ENCODE measurements at regions of chr6 and their contacts with region 1.

Region 1: DNA sequence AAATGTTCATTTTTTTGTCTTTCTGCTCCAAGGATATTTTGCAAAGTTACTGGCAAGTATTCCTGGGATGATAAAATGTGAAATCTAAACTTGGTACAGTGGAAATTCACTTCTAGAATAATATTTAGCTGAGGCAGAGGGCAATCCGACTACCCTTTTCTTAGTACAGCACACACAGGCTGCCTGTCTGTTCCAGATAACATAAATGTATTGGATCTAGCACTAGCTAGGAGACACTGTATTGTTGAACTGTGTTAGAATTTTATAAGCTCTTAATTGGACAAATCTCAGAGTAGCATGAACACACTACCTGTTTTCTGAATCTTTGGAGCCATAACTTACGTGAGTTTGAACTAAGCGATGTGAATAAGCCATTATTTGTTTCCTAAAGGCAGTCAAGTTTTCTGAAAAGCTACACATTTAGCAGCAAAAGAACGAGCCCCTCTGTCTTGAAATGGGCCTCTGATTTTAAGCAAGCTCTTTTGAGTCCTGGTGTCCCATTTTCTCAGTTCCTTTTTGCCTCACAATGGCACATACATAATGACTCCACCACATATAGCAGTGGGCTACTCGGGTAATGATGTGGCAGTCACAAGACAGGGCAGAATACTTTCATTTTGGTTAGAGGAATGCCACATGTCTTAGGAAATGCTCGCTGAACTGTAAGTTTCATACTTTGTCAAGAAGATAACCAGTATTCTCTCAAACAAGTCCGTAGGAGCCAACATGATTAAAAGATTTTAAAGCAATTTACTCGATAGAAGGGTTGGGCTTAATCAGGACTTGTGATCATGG is 116.5 kb upstream of the ESR1 start:
- DNase-seq: no peak
- H3K4me3 Mint-ChIP-seq: no peak overlapping the region
- H3K27ac Mint-ChIP-seq: no peak overlapping the region
- H3K4me1 Mint-ChIP-seq: no peaks in the 10 kb centered on the region
- H3K27me3 Mint-ChIP-seq: no peaks in the 10 kb centered on the region
- CTCF ChIP-seq: no peak

Region 2: DNA sequence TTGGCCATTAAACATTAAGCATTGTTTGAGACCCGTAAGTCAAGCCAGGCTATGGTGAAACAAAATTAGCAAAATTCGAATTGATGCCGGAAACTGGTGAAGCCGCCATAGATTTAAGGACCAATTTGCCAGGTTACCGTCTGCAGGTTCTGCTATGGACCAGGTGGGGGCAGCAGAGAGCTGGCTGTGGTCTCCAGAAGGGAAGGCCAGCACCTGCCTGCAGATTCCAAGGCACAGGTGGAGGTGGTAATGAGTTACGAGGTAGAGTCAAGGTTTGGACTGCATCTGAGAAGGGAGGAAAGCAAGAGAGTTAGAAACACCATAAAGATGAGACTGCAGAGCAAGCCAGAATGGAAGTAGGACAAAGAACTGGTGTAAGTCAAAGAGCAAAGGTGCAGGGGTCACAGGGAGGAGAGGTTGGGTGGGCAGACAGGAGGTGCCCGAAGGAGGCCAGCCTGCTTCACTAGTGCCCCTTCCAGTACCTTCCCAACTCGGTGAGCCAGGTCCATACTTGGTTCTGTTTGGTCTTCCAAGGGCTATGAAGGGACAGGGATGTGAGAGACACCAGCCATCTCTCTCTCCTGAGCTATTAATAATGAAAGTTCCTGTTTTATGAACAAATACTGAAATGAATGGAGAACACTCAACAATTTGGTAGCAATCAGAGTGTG is 15.1 kb before region 1 on chr6:
- CTCF ChIA-PET with region 1: interaction called, 13 read pairs
- POLR2A ChIA-PET with region 1: no interaction called
- intact Hi-C with region 1: no loop called
- DNase-seq: peak; percentile 71
- H3K4me3 Mint-ChIP-seq: no peak overlapping the region
- H3K27ac Mint-ChIP-seq: no peak overlapping the region
- H3K4me1 Mint-ChIP-seq: no peaks in the 10 kb centered on the region
- H3K27me3 Mint-ChIP-seq: no peaks in the 10 kb centered on the region
- CTCF ChIP-seq: peak; percentile 89

Region 3: DNA sequence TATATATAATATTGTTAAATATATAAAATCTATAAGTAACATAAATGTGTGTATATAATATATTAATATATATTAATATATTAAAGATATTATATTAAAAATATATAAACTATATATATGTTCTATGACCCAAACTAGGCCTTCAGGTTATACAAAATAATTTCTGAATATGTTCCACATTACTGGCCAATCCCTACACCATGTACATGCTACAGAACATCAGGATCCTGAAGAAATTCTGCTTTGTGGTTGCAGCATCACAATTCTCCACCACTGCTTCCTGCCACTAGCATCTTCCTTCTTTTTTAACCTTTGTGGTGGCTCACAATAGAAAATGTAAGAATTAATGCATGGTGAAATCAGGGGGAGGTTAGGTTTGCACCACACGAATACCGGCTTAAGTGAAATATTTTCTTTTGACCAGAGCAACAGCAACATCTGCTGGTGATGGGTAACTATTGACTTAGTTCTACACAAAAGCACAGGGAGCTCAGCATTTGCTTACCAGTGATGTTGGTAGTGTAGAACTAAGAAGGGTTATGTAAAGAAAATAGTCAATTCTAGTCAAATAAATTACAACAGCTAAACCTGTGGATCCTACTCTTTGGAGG is 665.6 kb after region 1 on chr6:
- CTCF ChIA-PET with region 1: no interaction called
- POLR2A ChIA-PET with region 1: no interaction called
- intact Hi-C with region 1: loop called (anchors 10 kb)
- DNase-seq: peak; percentile 48
- H3K4me3 Mint-ChIP-seq: no peak overlapping the region
- H3K27ac Mint-ChIP-seq: no peak overlapping the region
- H3K4me1 Mint-ChIP-seq: peaks cover 5% of the 10 kb centered on the region
- H3K27me3 Mint-ChIP-seq: no peaks in the 10 kb centered on the region
- CTCF ChIP-seq: peak; percentile 49

Measured in MCF 10A (cell line).